CD4-positive, alpha-beta memory T cell (primary cell): ENCODE measurements at regions of chr7 and their contacts with region 1.

Region 1: DNA sequence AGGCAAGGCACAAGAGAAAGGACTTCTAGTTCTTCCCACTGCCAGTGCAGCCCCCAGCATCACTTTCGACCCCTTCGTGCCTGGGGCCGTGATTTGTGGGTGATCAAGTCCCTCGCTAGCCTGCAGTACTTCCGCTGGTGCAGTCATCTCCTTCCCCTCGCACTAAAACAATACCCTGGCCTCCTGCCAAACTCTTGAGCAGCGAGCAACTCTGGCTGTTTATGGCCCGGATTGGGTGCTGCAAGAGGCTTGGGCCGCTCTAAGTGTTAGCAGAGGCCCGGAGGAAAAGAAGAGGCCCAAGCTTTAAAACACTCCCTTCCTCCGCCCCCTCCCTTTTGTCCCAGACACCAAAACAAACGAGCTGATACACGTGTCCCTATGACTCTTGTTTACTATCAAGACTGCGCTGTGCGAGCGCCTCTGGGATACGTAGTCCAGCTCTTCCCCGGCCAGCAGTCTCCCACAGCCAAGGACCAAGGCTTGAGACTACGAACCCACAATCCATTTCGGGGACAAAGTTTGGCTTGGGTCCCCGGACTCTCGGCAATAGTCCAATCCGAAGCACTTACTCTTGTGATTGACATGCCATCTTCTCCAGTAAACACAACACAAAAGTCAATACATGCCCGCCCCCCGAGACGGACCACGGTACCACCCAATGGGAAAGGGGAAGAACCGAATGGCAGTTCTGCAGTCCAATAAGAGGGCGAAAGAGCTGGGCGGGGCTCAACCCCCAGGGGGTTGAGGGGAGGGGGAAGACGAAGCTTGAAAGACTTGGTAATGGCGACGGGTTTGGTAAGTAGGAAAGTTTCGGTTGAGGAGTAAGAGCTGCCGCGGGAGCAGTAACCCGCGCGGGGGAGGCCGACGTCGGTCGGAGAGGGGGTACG is at the start of gene HBP1:
- DNase-seq: peak; percentile 97 to 100 (median 99)
- H3K4me3 ChIP-seq: peak within 1 kb of the TSS; percentile 84 to 85
- H3K4me3 Mint-ChIP-seq: peak within 1 kb of the TSS; percentile 90 to 100 (median 97)
- H3K27ac ChIP-seq: peak within 1 kb of the TSS; percentile 100
- H3K27ac Mint-ChIP-seq: peak within 1 kb of the TSS; percentile 98 to 100 (median 100)
- H3K4me1 ChIP-seq: peaks cover 44% of the 10 kb centered on the region
- H3K4me1 Mint-ChIP-seq: peaks cover 22 to 53% (median 37%) of the 10 kb centered on the region in 4 donors
- H3K27me3 ChIP-seq: no peaks in the 10 kb centered on the region
- H3K27me3 Mint-ChIP-seq: peaks cover 1 to 3% of the 10 kb centered on the region in 2 donors
- total RNA-seq, gene HBP1: 111 to 116 TPM

Region 2: DNA sequence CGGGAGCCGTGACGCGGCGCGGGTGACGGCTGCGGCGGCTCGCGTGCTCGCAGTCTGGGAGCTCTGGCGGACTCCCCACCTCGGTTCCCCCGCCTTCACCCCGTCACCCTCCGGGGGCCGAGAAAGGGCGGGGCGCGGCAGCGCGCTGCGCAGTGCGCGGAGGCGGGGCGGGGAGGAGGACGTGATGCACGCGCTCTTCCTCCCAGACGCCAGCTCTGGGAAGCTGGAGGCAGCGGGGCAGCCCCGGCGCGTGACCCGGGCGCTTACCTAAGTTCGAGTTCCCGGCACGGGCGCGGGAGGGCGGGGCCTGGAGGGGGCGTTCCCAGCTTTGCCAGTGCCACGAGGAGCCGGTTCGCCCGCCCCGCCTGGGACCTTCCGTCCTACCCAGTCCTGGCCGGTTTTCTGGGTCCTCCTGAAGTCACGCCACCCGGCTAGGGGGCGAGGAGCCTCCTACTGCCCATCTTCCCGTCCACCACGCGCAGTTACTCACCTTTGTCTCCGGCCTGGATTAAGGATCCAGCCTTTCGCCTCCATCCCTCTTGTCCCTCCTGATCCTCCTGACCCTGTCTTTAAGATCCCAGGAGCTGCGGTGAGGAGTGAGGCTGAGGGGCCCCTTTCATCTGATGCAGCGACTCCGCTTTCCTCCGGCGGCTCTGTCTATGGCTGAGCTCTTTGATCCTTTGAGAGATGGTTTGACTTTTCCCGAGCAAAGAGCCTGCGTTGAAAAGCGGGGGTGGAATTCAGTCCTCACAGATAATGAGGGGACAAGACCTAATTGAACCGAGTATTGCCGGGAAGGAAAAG is 883.2 kb before region 1 on chr7:
- CTCF ChIA-PET with region 1: no interaction called
- POLR2A ChIA-PET with region 1: interaction called, 22 read pairs
- intact Hi-C with region 1: no loop called
- DNase-seq: peak; percentile 93 to 99 (median 97)
- H3K4me3 ChIP-seq: peak overlapping the region; percentile 86 to 97
- H3K4me3 Mint-ChIP-seq: peak overlapping the region; percentile 95 to 98 (median 96)
- H3K27ac ChIP-seq: peak overlapping the region; percentile 95
- H3K27ac Mint-ChIP-seq: peak overlapping the region; percentile 93 to 99 (median 98)
- H3K4me1 ChIP-seq: peaks cover 29% of the 10 kb centered on the region
- H3K4me1 Mint-ChIP-seq: peaks cover 14 to 28% (median 21%) of the 10 kb centered on the region in 4 donors
- H3K27me3 ChIP-seq: no peaks in the 10 kb centered on the region
- H3K27me3 Mint-ChIP-seq: no peaks in the 10 kb centered on the region

Region 3: DNA sequence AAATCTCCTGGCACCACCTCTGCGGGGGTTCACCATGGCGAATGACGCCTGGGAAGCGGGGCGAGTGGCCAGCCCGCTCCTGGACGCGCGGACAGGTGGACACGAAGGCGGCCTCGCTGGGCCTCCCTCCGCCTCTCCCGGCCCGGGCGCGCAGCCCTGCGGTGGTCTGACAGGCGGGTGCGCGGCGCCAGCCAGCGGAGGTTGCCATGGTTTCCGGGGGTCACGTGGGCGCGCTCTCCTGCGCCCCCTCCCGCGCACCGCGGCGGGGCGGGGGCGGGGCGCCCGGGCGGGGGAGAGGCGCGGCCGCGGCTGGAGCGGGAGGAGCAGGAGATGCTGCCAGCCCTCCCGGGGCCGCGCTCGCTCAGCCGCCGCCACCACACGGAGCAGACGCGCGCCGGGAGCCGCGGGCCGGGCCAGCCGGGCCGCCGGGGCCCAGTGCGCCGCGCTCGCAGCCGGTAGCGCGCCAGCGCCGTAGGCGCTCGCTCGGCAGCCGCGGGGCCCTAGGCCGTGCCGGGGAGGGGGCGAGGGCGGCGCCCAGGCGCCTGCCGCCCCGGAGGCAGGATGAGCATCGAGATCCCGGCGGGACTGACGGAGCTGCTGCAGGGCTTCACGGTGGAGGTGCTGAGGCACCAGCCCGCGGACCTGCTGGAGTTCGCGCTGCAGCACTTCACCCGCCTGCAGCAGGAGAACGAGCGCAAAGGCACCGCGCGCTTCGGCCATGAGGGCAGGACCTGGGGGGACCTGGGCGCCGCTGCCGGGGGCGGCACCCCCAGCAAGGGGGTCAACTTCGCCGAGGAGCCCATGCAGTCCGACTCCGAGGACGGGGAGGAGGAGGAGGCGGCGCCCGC is 123.9 kb before region 1 on chr7 and contains the start of gene PRKAR2B:
- CTCF ChIA-PET with region 1: no interaction called
- POLR2A ChIA-PET with region 1: no interaction called
- intact Hi-C with region 1: loop called (anchors 10 kb)
- DNase-seq: peak; percentile 73 to 85 (median 80)
- H3K4me3 ChIP-seq: peak within 1 kb of the TSS; percentile 42 to 61
- H3K4me3 Mint-ChIP-seq: peak within 1 kb of the TSS; percentile 85 to 95 (median 89)
- H3K27ac ChIP-seq: no peak within 1 kb of the TSS
- H3K27ac Mint-ChIP-seq: peak within 1 kb of the TSS; percentile 21 to 92 (median 62)
- H3K4me1 ChIP-seq: peaks cover 15% of the 10 kb centered on the region
- H3K4me1 Mint-ChIP-seq: peaks cover 7 to 21% (median 10%) of the 10 kb centered on the region in 4 donors
- H3K27me3 ChIP-seq: peaks cover 30% of the 10 kb centered on the region
- H3K27me3 Mint-ChIP-seq: peaks cover 20 to 26% of the 10 kb centered on the region in 2 donors
- total RNA-seq, gene PRKAR2B: 0.29 to 0.47 TPM

Region 4: DNA sequence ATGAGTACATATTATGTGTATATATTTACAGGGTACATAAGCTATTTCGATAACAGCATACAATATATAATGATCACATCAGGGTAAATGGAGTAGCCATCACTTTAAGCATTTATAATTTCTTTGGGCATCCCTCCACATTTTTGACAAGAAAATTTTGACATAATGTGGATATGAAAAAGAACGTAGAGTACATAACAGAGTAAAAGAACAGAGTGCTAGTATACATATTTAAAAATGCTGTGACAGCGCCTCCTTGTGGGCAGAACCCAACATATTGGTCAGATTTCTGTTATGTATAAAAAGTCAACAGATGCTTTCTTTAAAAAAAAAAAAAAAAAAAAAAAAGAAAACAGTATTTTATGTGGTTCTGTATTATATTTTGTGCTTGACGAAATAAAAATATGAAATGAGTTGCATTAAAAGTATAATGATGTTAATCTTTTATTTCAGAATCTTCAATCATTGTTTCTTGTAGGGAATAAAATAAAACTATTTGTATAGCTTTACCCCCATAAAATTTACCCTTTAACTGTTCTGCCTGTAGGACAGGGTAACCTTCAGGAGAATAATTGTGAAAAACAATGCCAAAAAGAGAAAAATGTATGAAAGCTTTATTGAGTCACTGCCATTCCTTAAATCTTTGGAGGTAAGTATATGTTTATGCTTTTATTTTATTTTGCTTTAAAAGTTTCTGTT is 18.0 kb before region 1 on chr7:
- CTCF ChIA-PET with region 1: interaction called, 56 read pairs
- POLR2A ChIA-PET with region 1: interaction called, 86 read pairs
- intact Hi-C with region 1: loop called (anchors 1 kb)
- DNase-seq: peak; percentile 68 to 81 (median 74)
- H3K4me3 ChIP-seq: no peak overlapping the region
- H3K4me3 Mint-ChIP-seq: no peak overlapping the region
- H3K27ac ChIP-seq: no peak overlapping the region
- H3K27ac Mint-ChIP-seq: no peak overlapping the region
- H3K4me1 ChIP-seq: no peaks in the 10 kb centered on the region
- H3K4me1 Mint-ChIP-seq: peaks cover 0 to 2% (median 1%) of the 10 kb centered on the region in 4 donors
- H3K27me3 ChIP-seq: no peaks in the 10 kb centered on the region
- H3K27me3 Mint-ChIP-seq: peaks cover 0 to 2% of the 10 kb centered on the region in 2 donors

Region 5: GRCh38 chr7:107194049-107194448 is 25.6 kb after region 1 on chr7:
- CTCF ChIA-PET with region 1: interaction called, 4 read pairs
- POLR2A ChIA-PET with region 1: interaction called, 40 read pairs
- intact Hi-C with region 1: no loop called
- DNase-seq: no peak
- H3K4me3 ChIP-seq: no peak overlapping the region
- H3K4me3 Mint-ChIP-seq: no peak overlapping the region
- H3K27ac ChIP-seq: no peak overlapping the region
- H3K27ac Mint-ChIP-seq: peak overlapping the region in 3 of 7 donors; percentile 39 to 64 (median 54)
- H3K4me1 ChIP-seq: no peaks in the 10 kb centered on the region
- H3K4me1 Mint-ChIP-seq: peaks cover 0 to 9% (median 5%) of the 10 kb centered on the region in 4 donors
- H3K27me3 ChIP-seq: no peaks in the 10 kb centered on the region
- H3K27me3 Mint-ChIP-seq: no peaks in the 10 kb centered on the region

Region 6: DNA sequence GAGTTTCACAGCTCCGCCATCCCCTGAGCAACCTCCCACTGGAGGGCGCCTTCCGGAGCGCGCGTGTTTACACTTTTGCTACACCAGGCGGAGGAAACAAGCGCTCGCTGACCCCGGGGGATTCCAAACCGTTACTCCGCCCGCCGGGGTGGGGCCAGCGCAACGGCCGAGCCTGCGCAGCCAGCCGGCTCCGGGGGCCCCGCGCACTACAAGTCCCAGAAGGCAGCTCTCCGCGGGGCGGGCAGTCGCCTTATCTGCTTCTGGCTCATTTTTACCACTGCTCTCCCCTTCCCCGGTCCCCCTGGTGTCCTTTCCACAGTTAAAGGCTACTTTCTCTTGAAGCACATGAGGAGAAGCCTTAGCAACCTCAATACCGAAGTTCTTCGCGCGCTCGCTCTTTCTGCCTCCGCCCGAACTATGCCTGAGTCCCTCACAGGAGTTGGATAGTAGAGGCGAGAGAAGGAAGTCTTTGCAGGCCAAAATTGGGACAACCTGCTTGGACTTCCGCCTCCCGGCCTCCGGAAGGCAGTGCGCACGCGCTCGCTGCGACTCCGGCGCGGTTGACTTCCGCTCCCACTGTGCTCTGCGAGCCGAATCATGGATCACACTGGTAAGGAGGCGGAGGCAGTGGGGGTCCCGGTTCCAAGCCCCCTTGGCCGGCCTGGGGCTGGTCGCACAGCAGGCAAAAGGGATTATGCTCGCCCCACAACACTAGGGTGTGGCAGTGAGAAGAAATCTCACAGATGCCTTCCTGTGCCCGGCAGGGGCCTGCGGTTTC is 575.3 kb after region 1 on chr7 and contains the start of gene CBLL1:
- CTCF ChIA-PET with region 1: interaction called, 11 read pairs
- POLR2A ChIA-PET with region 1: interaction called, 78 read pairs
- intact Hi-C with region 1: loop called (anchors 1 kb)
- DNase-seq: peak; percentile 96 to 98 (median 97)
- H3K4me3 ChIP-seq: peak within 1 kb of the TSS; percentile 97 to 98
- H3K4me3 Mint-ChIP-seq: peak within 1 kb of the TSS; percentile 90 to 100 (median 97)
- H3K27ac ChIP-seq: peak within 1 kb of the TSS; percentile 99
- H3K27ac Mint-ChIP-seq: peak within 1 kb of the TSS; percentile 99 to 100 (median 100)
- H3K4me1 ChIP-seq: peaks cover 55% of the 10 kb centered on the region
- H3K4me1 Mint-ChIP-seq: peaks cover 27 to 57% (median 41%) of the 10 kb centered on the region in 4 donors
- H3K27me3 ChIP-seq: no peaks in the 10 kb centered on the region
- H3K27me3 Mint-ChIP-seq: no peaks in the 10 kb centered on the region
- total RNA-seq, gene CBLL1: 79.1 to 82.8 TPM

Region 7: GRCh38 chr7:108569381-108570145 is 1401.1 kb after region 1 on chr7 and contains the starts of genes DNAJB9 and THAP5:
- CTCF ChIA-PET with region 1: interaction called, 5 read pairs
- POLR2A ChIA-PET with region 1: interaction called, 8 read pairs
- intact Hi-C with region 1: loop called (anchors 2 kb)
- DNase-seq: peak; percentile 99 to 100 (median 100)
- H3K4me3 ChIP-seq: peak within 1 kb of the TSS; percentile 77 to 97
- H3K4me3 Mint-ChIP-seq: peak within 1 kb of the TSS; percentile 91 to 99 (median 96)
- H3K27ac ChIP-seq: peak within 1 kb of the TSS; percentile 100
- H3K27ac Mint-ChIP-seq: peak within 1 kb of the TSS; percentile 96 to 100 (median 99)
- H3K4me1 ChIP-seq: peaks cover 59% of the 10 kb centered on the region
- H3K4me1 Mint-ChIP-seq: peaks cover 31 to 82% (median 51%) of the 10 kb centered on the region in 4 donors
- H3K27me3 ChIP-seq: no peaks in the 10 kb centered on the region
- H3K27me3 Mint-ChIP-seq: no peaks in the 10 kb centered on the region
- total RNA-seq, gene DNAJB9: 43.6 to 49.3 TPM
- total RNA-seq, gene THAP5: 45.9 to 52.8 TPM